Esophagus squamous epithelium (tissue), 5 donors: ENCODE measurements at regions of chr12 and their contacts with region 1.

Region 1: GRCh38 chr12:104215638-104216297 is at the start of gene TXNRD1:
- DNase-seq: peak; percentile 8
- H3K4me3 ChIP-seq: peak within 1 kb of the TSS; percentile 38 to 68 (median 66)
- H3K27ac ChIP-seq: peak within 1 kb of the TSS; percentile 67 to 91 (median 82)
- H3K4me1 ChIP-seq: peaks cover 20 to 44% (median 25%) of the 10 kb centered on the region in 3 donors
- H3K27me3 ChIP-seq: no peaks in the 10 kb centered on the region
- CTCF ChIP-seq: peak; percentile 75 to 92 (median 88)
- POLR2A ChIP-seq: peak in 1 of 4 donors; percentile 28
- total RNA-seq, gene TXNRD1: 40.6 to 125 (median 82.0) TPM

Region 2: GRCh38 chr12:104286538-104287482 is 71.0 kb after region 1 on chr12:
- intact Hi-C with region 1: loop called (anchors 5 kb)
- DNase-seq: peak; percentile 67
- H3K4me3 ChIP-seq: peak overlapping the region; percentile 43 to 84 (median 66)
- H3K27ac ChIP-seq: peak overlapping the region; percentile 95 to 97 (median 95)
- H3K4me1 ChIP-seq: peaks cover 8 to 48% (median 21%) of the 10 kb centered on the region in 3 donors
- H3K27me3 ChIP-seq: peaks cover 0 to 10% (median 0%) of the 10 kb centered on the region in 4 donors
- CTCF ChIP-seq: peak in 1 of 6 experiments; percentile 17
- POLR2A ChIP-seq: peak in 3 of 4 donors; percentile 7 to 88 (median 81)

Region 3: DNA sequence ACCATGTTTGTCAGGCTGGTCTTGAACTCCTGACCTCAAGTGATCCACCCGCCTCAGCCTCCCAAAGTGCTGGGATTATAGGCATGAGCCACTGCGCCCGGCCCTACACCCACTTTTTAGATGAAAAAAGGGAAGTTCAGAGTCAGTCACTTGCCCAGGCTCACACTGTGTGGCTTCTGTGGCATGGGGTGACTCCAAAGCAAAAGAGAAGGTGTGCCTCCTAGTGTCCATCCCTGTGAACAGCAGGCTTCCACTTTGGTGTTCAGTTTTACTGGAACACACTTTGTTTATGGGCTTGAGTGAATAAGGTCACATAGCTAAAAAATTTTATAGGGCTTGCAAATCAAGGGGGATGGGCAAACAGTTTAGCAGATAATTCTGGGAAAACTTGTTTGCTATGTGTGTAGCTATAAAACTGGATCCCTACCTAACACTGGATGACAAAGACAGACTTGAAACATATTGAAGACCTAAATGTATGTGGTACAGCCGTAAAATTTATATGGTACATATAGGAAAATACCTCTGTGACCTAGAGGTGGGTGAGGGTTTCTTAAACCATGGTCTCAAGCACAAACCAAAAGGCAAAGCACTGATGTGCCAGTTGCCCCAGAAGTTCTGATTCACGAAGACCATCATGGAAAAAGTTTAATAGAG is 142.7 kb after region 1 on chr12:
- intact Hi-C with region 1: loop called (anchors 5 kb)
- DNase-seq: no peak
- H3K4me3 ChIP-seq: no peak overlapping the region
- H3K27ac ChIP-seq: no peak overlapping the region
- H3K4me1 ChIP-seq: no peaks in the 10 kb centered on the region
- H3K27me3 ChIP-seq: no peaks in the 10 kb centered on the region
- CTCF ChIP-seq: peak; percentile 86 to 92 (median 88)
- POLR2A ChIP-seq: no peak

Region 4: GRCh38 chr12:104371043-104371870 is 155.5 kb after region 1 on chr12:
- intact Hi-C with region 1: no loop called
- DNase-seq: no peak
- H3K4me3 ChIP-seq: no peak overlapping the region
- H3K27ac ChIP-seq: no peak overlapping the region
- H3K4me1 ChIP-seq: no peaks in the 10 kb centered on the region
- H3K27me3 ChIP-seq: no peaks in the 10 kb centered on the region
- CTCF ChIP-seq: no peak
- POLR2A ChIP-seq: no peak